ENCODE measurements at regions of chr1 and their contacts with region 1.

Region 1: GRCh38 chr1:39799770-39800470 is 11.3 kb upstream of the BMP8B start:
- DNase-seq: peak; percentile 80
- ATAC-seq: peak; percentile 72
- H3K4me3 Mint-ChIP-seq: peak overlapping the region; percentile 64
- H3K27ac Mint-ChIP-seq: peak overlapping the region; percentile 87
- H3K4me1 Mint-ChIP-seq: peaks cover 15% of the 10 kb centered on the region
- H3K27me3 Mint-ChIP-seq: no peaks in the 10 kb centered on the region

Region 2: GRCh38 chr1:39554277-39554676 is 245.6 kb before region 1 on chr1:
- CTCF ChIA-PET with region 1: no interaction called
- DNase-seq: no peak
- ATAC-seq: no peak
- H3K4me3 Mint-ChIP-seq: no peak overlapping the region
- H3K27ac Mint-ChIP-seq: no peak overlapping the region
- H3K4me1 Mint-ChIP-seq: peaks cover 17% of the 10 kb centered on the region
- H3K27me3 Mint-ChIP-seq: no peaks in the 10 kb centered on the region

Region 3: DNA sequence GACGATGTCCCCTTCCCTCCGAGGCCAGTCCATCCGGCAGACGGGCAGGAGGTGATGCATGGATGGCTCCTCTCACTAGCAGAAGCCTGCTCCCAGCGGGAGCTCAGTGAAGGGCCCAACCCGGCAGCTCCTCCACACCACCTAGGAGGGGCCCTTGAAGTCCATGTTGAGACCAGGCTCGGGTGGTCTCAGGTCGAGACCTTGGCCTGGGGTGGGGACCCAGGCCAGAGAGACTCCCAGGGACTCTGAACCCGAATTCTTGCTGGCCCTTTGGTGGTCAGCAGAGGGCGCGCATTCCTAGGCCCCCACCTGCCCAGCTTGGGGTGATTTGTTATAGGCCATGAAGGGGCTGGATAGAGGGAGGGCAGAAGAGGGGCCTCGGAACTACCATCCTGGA is 127.4 kb before region 1 on chr1:
- CTCF ChIA-PET with region 1: interaction called, 29 read pairs
- DNase-seq: peak; percentile 53
- ATAC-seq: peak; percentile 30
- H3K4me3 Mint-ChIP-seq: no peak overlapping the region
- H3K27ac Mint-ChIP-seq: no peak overlapping the region
- H3K4me1 Mint-ChIP-seq: peaks cover 10% of the 10 kb centered on the region
- H3K27me3 Mint-ChIP-seq: peaks cover 39% of the 10 kb centered on the region

Region 4: DNA sequence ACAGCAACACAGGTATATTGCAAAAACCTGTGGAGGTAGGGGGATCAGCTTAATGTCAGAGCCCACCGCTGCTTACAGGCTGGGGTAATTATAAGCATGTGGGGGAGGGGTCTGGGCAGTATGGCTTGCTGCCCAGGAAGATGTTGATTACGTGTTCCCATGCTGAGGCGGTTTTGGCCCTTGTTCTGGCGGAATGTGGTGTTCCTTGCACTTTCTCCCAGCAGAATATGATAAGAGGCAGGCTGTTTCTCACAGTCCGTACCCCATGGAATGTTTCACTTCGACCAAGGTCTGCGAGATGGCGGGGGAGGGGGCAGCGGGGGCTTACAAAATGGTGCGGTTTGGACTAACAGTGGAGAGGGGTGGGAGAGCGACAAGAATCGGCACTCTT is 98.9 kb before region 1 on chr1:
- CTCF ChIA-PET with region 1: interaction called, 11 read pairs
- DNase-seq: peak; percentile 18
- ATAC-seq: no peak
- H3K4me3 Mint-ChIP-seq: no peak overlapping the region
- H3K27ac Mint-ChIP-seq: no peak overlapping the region
- H3K4me1 Mint-ChIP-seq: no peaks in the 10 kb centered on the region
- H3K27me3 Mint-ChIP-seq: peaks cover 33% of the 10 kb centered on the region

Region 5: DNA sequence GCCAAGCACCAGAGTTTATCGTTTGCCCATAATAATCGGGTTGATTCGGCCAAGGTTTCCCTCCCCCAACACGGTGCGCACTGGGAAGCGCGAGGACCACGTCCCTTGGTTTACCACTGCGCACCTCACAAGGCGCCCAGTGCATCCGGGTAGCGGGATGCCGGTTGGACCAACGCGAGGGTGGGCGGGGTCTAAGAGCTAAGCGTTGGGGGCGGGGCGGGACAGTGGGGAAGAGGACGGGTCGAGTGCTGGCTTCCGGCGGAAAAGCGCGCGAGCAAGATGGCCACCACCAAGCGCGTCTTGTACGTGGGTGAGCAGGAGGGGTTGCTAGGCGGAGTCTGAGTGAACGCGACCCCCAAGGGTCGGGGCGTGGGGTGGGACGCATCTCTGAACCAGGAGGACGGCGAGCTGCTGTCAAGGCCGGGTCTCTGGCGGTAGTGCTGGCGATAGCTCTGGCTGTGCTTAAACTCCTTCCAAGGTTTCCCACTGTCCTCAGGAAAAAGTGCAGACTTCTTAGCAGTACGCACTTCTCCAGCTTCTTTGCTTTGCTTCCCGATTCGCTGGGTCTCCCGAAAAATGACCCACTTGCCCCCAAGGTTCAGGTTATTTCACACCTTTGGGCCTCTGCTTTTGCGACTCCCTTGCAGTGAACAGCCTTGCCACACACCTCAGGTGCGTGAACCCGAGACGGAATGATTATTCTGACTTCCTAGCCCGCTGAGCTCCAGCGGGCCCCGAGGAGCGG is 61.1 kb before region 1 on chr1 and contains the start of gene PPIE:
- CTCF ChIA-PET with region 1: interaction called, 13 read pairs
- DNase-seq: peak; percentile 98
- ATAC-seq: peak; percentile 97
- H3K4me3 Mint-ChIP-seq: peak within 1 kb of the TSS; percentile 98
- H3K27ac Mint-ChIP-seq: peak within 1 kb of the TSS; percentile 95
- H3K4me1 Mint-ChIP-seq: peaks cover 54% of the 10 kb centered on the region
- H3K27me3 Mint-ChIP-seq: peaks cover 11% of the 10 kb centered on the region
- total RNA-seq, gene PPIE: 67.4 to 69.5 TPM

Region 6: DNA sequence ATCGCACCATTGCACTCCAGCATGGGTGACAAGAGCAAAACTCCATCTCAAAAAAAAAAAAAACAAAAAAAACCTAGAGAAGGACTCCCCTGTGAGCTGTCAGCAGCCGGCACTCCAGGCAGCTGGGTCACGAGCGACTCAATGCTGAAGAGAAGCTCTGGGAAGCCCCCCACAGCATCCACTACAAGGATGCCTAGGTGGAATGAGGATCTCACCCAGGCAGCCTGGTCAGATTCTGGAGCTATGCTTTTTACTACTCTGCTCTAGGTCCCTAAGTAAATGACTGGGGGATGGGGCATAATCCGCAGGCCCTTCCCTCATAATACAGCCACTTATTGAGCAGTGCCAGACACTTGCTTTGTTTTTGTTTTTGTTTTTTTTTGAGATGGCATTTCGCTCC is 17.8 kb before region 1 on chr1:
- CTCF ChIA-PET with region 1: interaction called, 11 read pairs
- DNase-seq: no peak
- ATAC-seq: no peak
- H3K4me3 Mint-ChIP-seq: no peak overlapping the region
- H3K27ac Mint-ChIP-seq: no peak overlapping the region
- H3K4me1 Mint-ChIP-seq: no peaks in the 10 kb centered on the region
- H3K27me3 Mint-ChIP-seq: peaks cover 10% of the 10 kb centered on the region

Region 7: GRCh38 chr1:39788758-39789570 is 11.0 kb before region 1 on chr1 and contains the start of gene BMP8B:
- CTCF ChIA-PET with region 1: interaction called, 18 read pairs
- DNase-seq: peak; percentile 60
- ATAC-seq: peak; percentile 88
- H3K4me3 Mint-ChIP-seq: peak within 1 kb of the TSS; percentile 69
- H3K27ac Mint-ChIP-seq: peak within 1 kb of the TSS; percentile 36
- H3K4me1 Mint-ChIP-seq: peaks cover 12% of the 10 kb centered on the region
- H3K27me3 Mint-ChIP-seq: peaks cover 32% of the 10 kb centered on the region
- total RNA-seq, gene BMP8B: 0.47 to 0.61 TPM

Region 8: GRCh38 chr1:39816415-39817090 is 16.6 kb after region 1 on chr1:
- CTCF ChIA-PET with region 1: interaction called, 10 read pairs
- DNase-seq: peak; percentile 57
- ATAC-seq: peak; percentile 68
- H3K4me3 Mint-ChIP-seq: no peak overlapping the region
- H3K27ac Mint-ChIP-seq: peak overlapping the region; percentile 30
- H3K4me1 Mint-ChIP-seq: peaks cover 5% of the 10 kb centered on the region
- H3K27me3 Mint-ChIP-seq: peaks cover 18% of the 10 kb centered on the region